Thyroid gland (tissue), 4 donors: ENCODE measurements at regions of chr6 and their contacts with region 1.

Region 1: GRCh38 chr6:134123666-134124208 is 71.3 kb upstream of the SLC2A12 start:
- DNase-seq: no peak
- H3K4me3 ChIP-seq: no peak overlapping the region
- H3K27ac ChIP-seq: no peak overlapping the region
- H3K4me1 ChIP-seq: no peaks in the 10 kb centered on the region
- H3K27me3 ChIP-seq: no peaks in the 10 kb centered on the region
- CTCF ChIP-seq: peak in 5 of 6 experiments; percentile 47 to 78 (median 72)
- POLR2A ChIP-seq: no peak

Region 2: GRCh38 chr6:134938896-134939295 is 815.2 kb after region 1 on chr6:
- intact Hi-C with region 1: loop called (anchors 10 kb)
- DNase-seq: no peak
- H3K4me3 ChIP-seq: no peak overlapping the region
- H3K27ac ChIP-seq: no peak overlapping the region
- H3K4me1 ChIP-seq: no peaks in the 10 kb centered on the region
- H3K27me3 ChIP-seq: no peaks in the 10 kb centered on the region
- CTCF ChIP-seq: no peak
- POLR2A ChIP-seq: no peak